Naive thymus-derived CD4-positive, alpha-beta T cell (primary cell): ENCODE measurements at regions of chr15 and their contacts with region 1.

Region 1: DNA sequence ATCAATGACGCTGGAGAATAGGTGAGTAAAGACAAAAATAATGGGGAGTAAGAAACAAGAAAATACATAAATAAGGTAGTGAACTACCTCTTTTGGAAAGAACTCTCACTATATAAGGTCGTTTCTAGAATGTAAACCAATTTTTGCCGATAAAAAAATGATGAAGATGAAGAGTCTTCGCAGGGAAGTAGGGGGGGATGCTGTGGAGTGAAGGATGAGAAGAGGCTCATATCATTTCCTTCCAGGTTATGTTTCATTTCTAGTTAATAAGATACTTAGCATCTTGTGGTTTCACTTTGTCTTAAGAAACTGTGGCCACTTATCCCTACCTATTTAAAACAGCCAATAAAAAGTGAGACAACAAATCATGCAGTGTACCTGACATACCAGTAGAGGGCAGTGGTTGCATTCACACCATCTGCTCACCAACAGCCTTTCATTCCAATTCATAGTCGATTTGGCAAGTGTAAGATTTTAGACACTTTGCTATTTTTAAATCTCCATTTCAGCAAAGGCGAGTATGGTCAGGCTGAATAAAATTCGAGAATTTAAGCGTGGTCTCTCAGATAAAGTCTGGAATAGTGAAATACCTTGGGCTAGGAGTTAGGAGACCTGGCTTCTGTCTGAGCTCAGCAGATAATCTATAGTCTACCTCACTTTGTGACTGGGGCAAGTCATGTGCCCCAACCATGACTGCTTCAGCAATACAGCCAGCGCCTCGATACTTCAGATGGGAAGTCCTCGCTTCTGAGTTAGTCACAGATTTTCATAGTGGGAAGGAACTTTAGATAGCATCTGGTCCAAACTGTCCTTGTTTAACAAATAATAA is 28.9 kb upstream of the ICE2 start:
- DNase-seq: peak in 7 of 9 donors; percentile 55 to 80 (median 73)
- ATAC-seq: peak; percentile 97
- H3K4me3 ChIP-seq: no peak overlapping the region
- H3K4me3 Mint-ChIP-seq: peak overlapping the region in 5 of 10 donors; percentile 7 to 30 (median 10)
- H3K27ac ChIP-seq: peak overlapping the region; percentile 6
- H3K27ac Mint-ChIP-seq: peak overlapping the region; percentile 38 to 86 (median 55)
- H3K4me1 ChIP-seq: peaks cover 4 to 7% of the 10 kb centered on the region in 2 donors
- H3K4me1 Mint-ChIP-seq: peaks cover 16 to 60% (median 42%) of the 10 kb centered on the region in 7 donors
- H3K27me3 ChIP-seq: no peaks in the 10 kb centered on the region
- H3K27me3 Mint-ChIP-seq: no peaks in the 10 kb centered on the region

Region 2: DNA sequence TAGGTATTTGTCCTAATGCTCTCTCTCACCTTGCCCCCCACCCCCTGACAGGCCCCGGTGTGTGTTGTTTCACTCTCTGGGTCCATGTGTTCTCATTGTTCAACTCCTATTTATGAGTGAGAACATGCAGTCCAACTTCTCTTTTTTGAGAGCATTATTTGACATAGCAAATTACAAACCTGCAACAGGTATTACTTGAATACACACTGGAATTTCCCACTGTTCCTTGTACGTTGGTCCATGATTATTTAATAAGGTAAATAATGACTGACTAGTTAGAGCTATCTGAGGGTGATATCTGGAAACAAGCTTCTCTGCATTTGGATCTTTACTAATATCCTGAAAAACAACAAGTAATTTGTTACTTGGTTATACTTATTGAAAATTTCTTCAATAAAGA is 53.0 kb before region 1 on chr15:
- CTCF ChIA-PET with region 1: no interaction called
- POLR2A ChIA-PET with region 1: no interaction called
- intact Hi-C with region 1: no loop called
- DNase-seq: no peak
- ATAC-seq: no peak
- H3K4me3 ChIP-seq: no peak overlapping the region
- H3K4me3 Mint-ChIP-seq: no peak overlapping the region
- H3K27ac ChIP-seq: no peak overlapping the region
- H3K27ac Mint-ChIP-seq: no peak overlapping the region
- H3K4me1 ChIP-seq: no peaks in the 10 kb centered on the region
- H3K4me1 Mint-ChIP-seq: peaks cover 0 to 7% (median 0%) of the 10 kb centered on the region in 7 donors
- H3K27me3 ChIP-seq: no peaks in the 10 kb centered on the region
- H3K27me3 Mint-ChIP-seq: no peaks in the 10 kb centered on the region

Region 3: GRCh38 chr15:60520825-60521368 is 13.1 kb after region 1 on chr15:
- CTCF ChIA-PET with region 1: interaction called, 27 read pairs
- POLR2A ChIA-PET with region 1: interaction called, 3 read pairs
- intact Hi-C with region 1: loop called (anchors 1 kb)
- DNase-seq: peak; percentile 50 to 75 (median 67)
- ATAC-seq: peak; percentile 94
- H3K4me3 ChIP-seq: no peak overlapping the region
- H3K4me3 Mint-ChIP-seq: peak overlapping the region in 2 of 10 donors; percentile 1 to 25
- H3K27ac ChIP-seq: no peak overlapping the region
- H3K27ac Mint-ChIP-seq: peak overlapping the region; percentile 1 to 85 (median 59)
- H3K4me1 ChIP-seq: peaks cover 7 to 13% of the 10 kb centered on the region in 2 donors
- H3K4me1 Mint-ChIP-seq: peaks cover 36 to 64% (median 63%) of the 10 kb centered on the region in 7 donors
- H3K27me3 ChIP-seq: no peaks in the 10 kb centered on the region
- H3K27me3 Mint-ChIP-seq: no peaks in the 10 kb centered on the region

Region 4: DNA sequence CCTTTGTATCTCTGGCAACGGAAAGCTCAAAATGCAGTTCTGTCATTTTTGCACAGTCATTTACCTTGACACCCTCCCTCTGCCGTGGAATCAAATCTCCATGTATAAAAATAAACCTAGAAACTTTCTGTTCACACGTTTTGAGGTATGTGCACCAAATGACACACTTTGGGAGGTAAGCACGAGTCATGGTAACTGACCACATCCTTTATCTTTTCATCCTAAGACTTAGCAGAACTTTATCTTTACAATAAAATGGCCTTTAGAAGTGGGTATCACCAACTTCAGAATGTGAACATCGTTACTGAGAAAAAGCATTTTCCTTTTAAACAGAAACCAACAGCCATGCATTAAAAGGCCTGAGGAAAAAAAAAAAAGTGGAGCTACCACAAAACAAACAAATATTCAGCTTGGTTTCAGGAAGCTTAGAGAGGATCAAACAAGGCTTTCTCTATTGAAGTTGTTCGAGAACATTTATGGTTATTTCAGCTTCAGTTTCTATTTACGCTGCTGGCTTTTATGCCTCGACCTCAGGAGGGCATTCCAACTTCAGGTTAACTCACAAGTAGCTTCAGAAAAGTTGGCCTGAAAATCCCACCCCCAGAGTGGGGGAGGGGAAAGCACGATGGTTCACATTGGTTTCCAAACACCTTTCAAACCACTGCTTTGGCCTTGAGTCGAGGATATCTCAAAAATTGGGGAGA is 142.2 kb after region 1 on chr15:
- CTCF ChIA-PET with region 1: no interaction called
- POLR2A ChIA-PET with region 1: no interaction called
- intact Hi-C with region 1: loop called in 1 of 2 experiments (anchors 5 kb)
- DNase-seq: peak in 8 of 9 donors; percentile 42 to 78 (median 62)
- ATAC-seq: peak; percentile 90
- H3K4me3 ChIP-seq: peak overlapping the region; percentile 33
- H3K4me3 Mint-ChIP-seq: peak overlapping the region; percentile 66 to 84 (median 75)
- H3K27ac ChIP-seq: no peak overlapping the region
- H3K27ac Mint-ChIP-seq: peak overlapping the region; percentile 55 to 96 (median 82)
- H3K4me1 ChIP-seq: peaks cover 18 to 23% of the 10 kb centered on the region in 2 donors
- H3K4me1 Mint-ChIP-seq: peaks cover 24 to 50% (median 39%) of the 10 kb centered on the region in 7 donors
- H3K27me3 ChIP-seq: no peaks in the 10 kb centered on the region
- H3K27me3 Mint-ChIP-seq: peaks cover 0 to 3% (median 0%) of the 10 kb centered on the region in 5 donors

Region 5: DNA sequence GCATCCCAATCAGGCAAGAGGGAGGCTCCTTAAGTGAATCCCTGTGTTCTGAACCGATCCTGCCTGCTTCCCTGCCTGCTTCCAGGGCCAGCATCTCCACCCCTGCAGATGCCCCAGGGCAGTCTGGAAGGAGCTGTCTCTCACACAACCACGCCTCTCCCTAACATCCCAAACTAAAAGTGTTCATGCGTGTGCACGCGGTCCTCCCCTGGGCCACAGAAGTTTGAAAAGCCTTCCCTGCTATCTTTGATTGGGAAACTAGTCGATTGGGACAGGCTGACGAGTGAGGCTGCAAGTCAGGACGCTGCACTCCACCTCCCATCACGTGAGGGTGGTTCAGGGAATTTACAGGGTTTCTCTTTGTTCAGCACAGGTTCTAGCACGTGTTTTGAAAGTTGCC is 312.1 kb after region 1 on chr15:
- CTCF ChIA-PET with region 1: no interaction called
- POLR2A ChIA-PET with region 1: no interaction called
- intact Hi-C with region 1: no loop called
- DNase-seq: no peak
- ATAC-seq: peak; percentile 37
- H3K4me3 ChIP-seq: no peak overlapping the region
- H3K4me3 Mint-ChIP-seq: peak overlapping the region in 7 of 10 donors; percentile 9 to 68 (median 31)
- H3K27ac ChIP-seq: no peak overlapping the region
- H3K27ac Mint-ChIP-seq: peak overlapping the region in 6 of 9 donors; percentile 42 to 88 (median 57)
- H3K4me1 ChIP-seq: no peaks in the 10 kb centered on the region
- H3K4me1 Mint-ChIP-seq: peaks cover 0 to 42% (median 28%) of the 10 kb centered on the region in 7 donors
- H3K27me3 ChIP-seq: no peaks in the 10 kb centered on the region
- H3K27me3 Mint-ChIP-seq: peaks cover 0 to 2% (median 0%) of the 10 kb centered on the region in 5 donors

Region 6: GRCh38 chr15:60905587-60905986 is 397.8 kb after region 1 on chr15:
- CTCF ChIA-PET with region 1: interaction called, 6 read pairs
- POLR2A ChIA-PET with region 1: no interaction called
- intact Hi-C with region 1: loop called in 1 of 2 experiments (anchors 1 kb)
- DNase-seq: peak in 6 of 9 donors; percentile 24 to 45 (median 38)
- ATAC-seq: peak; percentile 68
- H3K4me3 ChIP-seq: no peak overlapping the region
- H3K4me3 Mint-ChIP-seq: no peak overlapping the region
- H3K27ac ChIP-seq: no peak overlapping the region
- H3K27ac Mint-ChIP-seq: peak overlapping the region in 1 of 9 donors; percentile 16
- H3K4me1 ChIP-seq: no peaks in the 10 kb centered on the region
- H3K4me1 Mint-ChIP-seq: peaks cover 0 to 38% (median 2%) of the 10 kb centered on the region in 7 donors
- H3K27me3 ChIP-seq: no peaks in the 10 kb centered on the region
- H3K27me3 Mint-ChIP-seq: peaks cover 0 to 17% (median 0%) of the 10 kb centered on the region in 5 donors

Region 7: GRCh38 chr15:61834076-61834697 is 1326.4 kb after region 1 on chr15:
- CTCF ChIA-PET with region 1: interaction called, 3 read pairs
- POLR2A ChIA-PET with region 1: no interaction called
- intact Hi-C with region 1: loop called in 1 of 2 experiments (anchors 10 kb)
- DNase-seq: peak; percentile 21 to 74 (median 56)
- ATAC-seq: peak; percentile 85
- H3K4me3 ChIP-seq: no peak overlapping the region
- H3K4me3 Mint-ChIP-seq: peak overlapping the region in 2 of 10 donors; percentile 1 to 11
- H3K27ac ChIP-seq: no peak overlapping the region
- H3K27ac Mint-ChIP-seq: no peak overlapping the region
- H3K4me1 ChIP-seq: no peaks in the 10 kb centered on the region
- H3K4me1 Mint-ChIP-seq: peaks cover 0 to 6% (median 4%) of the 10 kb centered on the region in 7 donors
- H3K27me3 ChIP-seq: no peaks in the 10 kb centered on the region
- H3K27me3 Mint-ChIP-seq: peaks cover 19 to 28% (median 28%) of the 10 kb centered on the region in 5 donors